ENCODE measurements at regions of chr6 and their contacts with region 1.

Region 1: DNA sequence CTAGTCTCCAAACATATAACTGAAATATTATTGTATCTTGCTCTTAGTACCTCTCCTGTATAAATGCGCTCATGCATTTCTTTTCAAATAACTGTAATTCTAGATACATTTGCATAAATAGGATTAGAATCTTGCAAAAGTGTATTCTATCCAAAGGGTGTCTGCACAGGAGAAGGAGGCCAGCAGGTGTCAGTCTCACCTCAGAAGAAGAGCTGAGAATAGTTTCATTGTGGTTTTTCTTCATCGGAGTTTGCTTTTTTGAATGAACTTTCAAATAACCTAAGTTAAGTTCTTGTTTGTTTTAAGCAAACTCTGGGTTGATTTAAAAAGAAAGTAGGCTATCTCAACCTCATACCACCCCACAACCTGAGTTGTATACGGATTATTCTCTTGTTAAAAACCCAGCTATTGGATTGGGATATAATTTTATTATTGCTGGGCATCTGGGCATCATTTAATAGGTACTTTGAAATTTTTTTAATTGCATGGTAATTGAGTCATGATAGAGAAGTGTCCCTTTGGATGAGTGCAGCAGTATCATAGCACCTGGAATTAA is 125.0 kb upstream of the MLIP start:
- DNase-seq: peak in 3 of 5 donors; percentile 30 to 44 (median 31)
- ATAC-seq: peak; percentile 60 to 78 (median 68)
- H3K4me3 ChIP-seq: peak overlapping the region in 4 of 12 donors; percentile 4 to 15 (median 10)
- H3K27ac ChIP-seq: peak overlapping the region in 5 of 12 donors; percentile 47 to 74 (median 63)
- H3K4me1 ChIP-seq: peaks cover 0 to 40% (median 17%) of the 10 kb centered on the region in 12 donors
- H3K27me3 ChIP-seq: no peaks in the 10 kb centered on the region
- CTCF ChIP-seq: peak; percentile 39 to 86 (median 73)
- POLR2A ChIP-seq: no peak

Region 2: DNA sequence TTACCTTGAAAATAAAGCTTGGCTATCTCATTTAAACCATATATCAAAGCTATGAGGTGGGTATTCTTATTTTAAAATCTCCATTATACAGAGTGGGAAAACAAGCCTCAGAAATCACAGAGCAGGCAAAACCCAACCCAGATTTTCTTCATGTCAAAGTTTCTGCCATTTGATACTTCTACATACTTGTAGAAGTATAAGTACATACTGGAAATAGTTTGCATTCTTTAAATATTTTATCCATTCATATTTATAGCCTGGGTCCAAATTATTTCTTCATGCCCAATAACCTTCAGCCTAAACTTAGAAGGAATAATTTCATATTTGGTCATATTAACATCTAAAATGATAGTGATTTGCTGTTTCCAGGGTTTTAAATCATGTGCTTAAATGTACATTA is 186.8 kb after region 1 on chr6:
- intact Hi-C with region 1: loop called in 1 of 10 experiments (anchors 10 kb)
- DNase-seq: no peak
- ATAC-seq: no peak
- H3K4me3 ChIP-seq: no peak overlapping the region
- H3K27ac ChIP-seq: no peak overlapping the region
- H3K4me1 ChIP-seq: peaks cover 0 to 6% (median 0%) of the 10 kb centered on the region in 12 donors
- H3K27me3 ChIP-seq: no peaks in the 10 kb centered on the region
- CTCF ChIP-seq: no peak
- POLR2A ChIP-seq: no peak

Region 3: GRCh38 chr6:54267798-54268197 is 281.6 kb after region 1 on chr6:
- intact Hi-C with region 1: loop called in 7 of 10 experiments (anchors 2 to 10 kb)
- DNase-seq: no peak
- ATAC-seq: peak in 1 of 4 donors; percentile 11
- H3K4me3 ChIP-seq: no peak overlapping the region
- H3K27ac ChIP-seq: no peak overlapping the region
- H3K4me1 ChIP-seq: peaks cover 0 to 13% (median 0%) of the 10 kb centered on the region in 12 donors
- H3K27me3 ChIP-seq: no peaks in the 10 kb centered on the region
- CTCF ChIP-seq: peak in 8 of 12 donors; percentile 19 to 50 (median 38)
- POLR2A ChIP-seq: no peak

Region 4: DNA sequence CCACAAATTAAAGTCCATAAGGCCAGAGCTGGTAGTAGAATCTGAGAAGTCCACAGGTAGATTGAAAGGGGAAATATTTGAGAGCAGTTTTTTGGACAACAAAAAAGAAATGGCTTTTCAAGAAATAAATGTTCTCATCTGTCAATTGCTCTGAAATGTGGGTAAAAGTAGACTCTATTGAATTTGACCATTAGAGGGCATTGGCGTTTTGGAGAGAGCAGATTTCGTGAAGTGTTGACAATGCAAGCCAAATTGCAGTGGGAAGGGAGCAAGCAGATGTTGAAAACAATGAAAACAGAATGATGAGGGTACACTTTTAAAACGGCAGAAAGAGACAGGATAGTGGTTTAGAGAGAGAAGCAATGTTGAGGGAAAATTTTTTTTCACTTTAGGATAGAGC is 711.2 kb after region 1 on chr6:
- intact Hi-C with region 1: loop called in 1 of 10 experiments (anchors 5 kb)
- DNase-seq: no peak
- ATAC-seq: no peak
- H3K4me3 ChIP-seq: no peak overlapping the region
- H3K27ac ChIP-seq: no peak overlapping the region
- H3K4me1 ChIP-seq: no peaks in the 10 kb centered on the region
- H3K27me3 ChIP-seq: no peaks in the 10 kb centered on the region
- CTCF ChIP-seq: peak in 2 of 12 donors; percentile 8 to 9
- POLR2A ChIP-seq: no peak

Region 5: GRCh38 chr6:55069132-55069781 is 1083.0 kb after region 1 on chr6:
- intact Hi-C with region 1: loop called in 4 of 10 experiments (anchors 5 to 10 kb)
- DNase-seq: no peak
- ATAC-seq: peak in 2 of 4 donors; percentile 38 to 39
- H3K4me3 ChIP-seq: no peak overlapping the region
- H3K27ac ChIP-seq: no peak overlapping the region
- H3K4me1 ChIP-seq: peaks cover 0 to 5% (median 0%) of the 10 kb centered on the region in 12 donors
- H3K27me3 ChIP-seq: no peaks in the 10 kb centered on the region
- CTCF ChIP-seq: peak; percentile 34 to 65 (median 51)
- POLR2A ChIP-seq: no peak

Measured in heart left ventricle (tissue), 16 donors.